MCF 10A (cell line): ENCODE measurements at regions of chr14 and their contacts with region 1.

Region 1: DNA sequence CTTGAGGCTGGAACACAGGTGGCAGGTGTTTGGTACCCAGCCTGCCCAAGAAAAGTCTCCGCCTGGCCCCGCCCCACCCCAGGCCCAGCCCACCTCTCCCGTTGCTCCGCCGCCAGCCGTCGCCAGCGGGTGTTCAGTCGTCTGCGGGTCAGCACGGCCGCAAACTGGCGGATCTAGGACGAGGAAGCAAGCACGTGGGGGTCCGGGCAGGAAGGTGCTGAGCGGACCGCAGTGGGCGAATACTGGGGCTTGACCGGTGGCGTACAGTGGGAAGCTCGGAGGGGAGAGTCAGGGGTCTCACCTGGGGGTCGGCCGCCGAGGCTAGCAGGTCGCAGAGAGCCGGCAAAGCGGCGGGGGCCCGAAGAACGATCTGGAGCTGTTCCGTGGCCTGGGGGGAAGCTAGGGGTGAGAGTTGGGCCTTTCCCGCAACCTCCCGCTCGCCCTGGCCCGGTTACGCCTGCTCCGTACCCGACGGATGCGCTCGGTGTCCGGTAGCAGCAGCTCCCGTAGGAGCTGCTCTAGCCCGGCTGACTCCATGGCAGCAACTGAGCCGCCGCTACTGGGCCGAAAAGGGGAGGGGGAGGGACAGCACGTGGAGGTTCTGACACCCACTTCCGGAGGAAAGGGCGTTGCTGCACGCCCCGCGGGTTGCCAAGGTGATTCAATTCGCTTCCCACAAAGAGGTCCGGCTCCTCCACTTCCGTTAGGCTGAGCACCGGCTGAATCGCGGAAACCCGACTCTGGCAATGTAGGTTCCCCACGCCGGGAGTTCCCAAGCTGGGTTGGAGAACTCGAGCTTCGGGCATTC is at the start of gene IPO4:
- DNase-seq: peak; percentile 97
- H3K4me3 Mint-ChIP-seq: peak within 1 kb of the TSS; percentile 81
- H3K27ac Mint-ChIP-seq: peak within 1 kb of the TSS; percentile 84
- H3K4me1 Mint-ChIP-seq: peaks cover 12% of the 10 kb centered on the region
- H3K27me3 Mint-ChIP-seq: no peaks in the 10 kb centered on the region
- CTCF ChIP-seq: no peak
- total RNA-seq, gene IPO4: 57.2 and 100 TPM in 2 replicates

Region 2: DNA sequence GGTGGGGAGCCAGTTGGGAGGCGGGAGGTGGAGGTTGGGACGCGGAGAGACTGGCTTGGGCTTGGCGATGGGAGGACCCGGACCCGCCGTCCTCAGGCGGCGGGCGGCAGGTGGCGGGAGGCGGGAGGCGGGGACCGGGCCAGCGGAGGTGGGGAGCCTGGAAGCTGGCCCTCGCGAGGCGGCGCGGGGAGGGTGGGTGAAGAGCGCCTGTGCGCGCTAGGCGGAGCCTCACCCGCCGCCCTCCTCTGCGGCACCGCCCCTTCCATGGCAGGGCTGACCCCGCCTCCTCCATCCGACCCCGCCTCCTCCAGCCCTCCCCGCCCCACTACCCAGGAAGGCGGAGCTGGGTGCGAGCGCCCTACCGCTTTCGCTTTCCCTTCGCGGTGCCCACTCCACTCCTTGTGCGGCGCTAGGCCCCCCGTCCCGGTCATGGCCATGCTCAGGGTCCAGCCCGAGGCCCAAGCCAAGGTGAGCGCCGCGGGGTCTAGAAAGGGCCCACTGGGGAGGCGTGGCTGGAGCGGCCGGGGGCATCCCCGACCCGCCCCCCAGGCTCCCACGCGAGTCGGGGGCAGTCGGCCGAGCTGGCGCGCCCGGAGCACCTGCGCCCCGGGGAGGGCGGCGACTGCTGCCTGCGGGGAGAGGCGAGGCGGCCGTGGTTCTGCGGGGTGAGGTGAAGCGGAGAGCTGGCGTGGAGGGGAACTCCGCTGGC is 52.5 kb before region 1 on chr14 and contains the start of gene PSME1:
- CTCF ChIA-PET with region 1: no interaction called
- POLR2A ChIA-PET with region 1: interaction called, 14 read pairs
- intact Hi-C with region 1: no loop called
- DNase-seq: peak; percentile 89
- H3K4me3 Mint-ChIP-seq: peak within 1 kb of the TSS; percentile 75
- H3K27ac Mint-ChIP-seq: peak within 1 kb of the TSS; percentile 86
- H3K4me1 Mint-ChIP-seq: peaks cover 42% of the 10 kb centered on the region
- H3K27me3 Mint-ChIP-seq: no peaks in the 10 kb centered on the region
- CTCF ChIP-seq: no peak
- total RNA-seq, gene PSME1: 126 and 135 TPM in 2 replicates

Region 3: DNA sequence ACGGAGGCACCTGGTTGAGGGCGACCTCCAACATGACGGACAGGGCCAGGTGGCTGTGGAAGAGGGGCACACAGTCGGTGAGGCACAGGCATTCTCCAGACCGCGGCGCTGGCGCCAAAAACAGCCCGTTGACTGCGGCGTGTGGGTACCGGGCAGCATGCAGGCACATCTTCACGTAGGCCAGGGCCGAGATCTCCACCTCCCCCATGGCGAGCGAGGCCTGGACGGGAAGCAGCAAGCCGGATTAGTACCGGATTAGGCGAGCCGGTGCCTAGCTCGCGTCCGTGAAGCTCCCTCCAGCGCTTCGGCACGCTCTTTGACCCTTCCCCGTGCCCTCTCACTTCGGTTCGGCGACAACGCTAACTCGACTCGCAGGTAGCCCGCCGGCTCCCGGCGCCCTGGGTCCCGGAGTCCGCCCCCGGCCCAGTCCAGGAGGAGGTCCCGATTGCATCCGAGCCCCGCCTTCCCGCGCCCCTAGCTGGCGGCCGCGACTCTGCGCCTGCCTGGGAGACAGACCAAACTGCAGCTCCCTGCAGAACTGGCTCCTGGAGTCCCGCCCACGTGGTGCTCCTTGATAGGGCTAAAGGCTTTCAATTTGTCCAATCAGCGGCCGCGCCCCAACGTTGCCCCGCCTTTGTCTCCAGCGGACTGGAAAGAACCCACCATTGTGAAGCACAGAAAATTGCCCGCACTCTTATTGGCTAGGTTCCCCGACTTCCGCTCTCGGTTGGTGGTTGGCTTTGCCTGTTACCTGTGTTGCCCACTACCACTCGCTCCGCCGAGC is 47.2 kb before region 1 on chr14 and contains the start of gene EMC9:
- CTCF ChIA-PET with region 1: no interaction called
- POLR2A ChIA-PET with region 1: interaction called, 25 read pairs
- intact Hi-C with region 1: no loop called
- DNase-seq: peak; percentile 100
- H3K4me3 Mint-ChIP-seq: peak within 1 kb of the TSS; percentile 93
- H3K27ac Mint-ChIP-seq: peak within 1 kb of the TSS; percentile 64
- H3K4me1 Mint-ChIP-seq: peaks cover 21% of the 10 kb centered on the region
- H3K27me3 Mint-ChIP-seq: no peaks in the 10 kb centered on the region
- CTCF ChIP-seq: peak; percentile 14
- total RNA-seq, gene EMC9: 49.2 and 49.9 TPM in 2 replicates

Region 4: DNA sequence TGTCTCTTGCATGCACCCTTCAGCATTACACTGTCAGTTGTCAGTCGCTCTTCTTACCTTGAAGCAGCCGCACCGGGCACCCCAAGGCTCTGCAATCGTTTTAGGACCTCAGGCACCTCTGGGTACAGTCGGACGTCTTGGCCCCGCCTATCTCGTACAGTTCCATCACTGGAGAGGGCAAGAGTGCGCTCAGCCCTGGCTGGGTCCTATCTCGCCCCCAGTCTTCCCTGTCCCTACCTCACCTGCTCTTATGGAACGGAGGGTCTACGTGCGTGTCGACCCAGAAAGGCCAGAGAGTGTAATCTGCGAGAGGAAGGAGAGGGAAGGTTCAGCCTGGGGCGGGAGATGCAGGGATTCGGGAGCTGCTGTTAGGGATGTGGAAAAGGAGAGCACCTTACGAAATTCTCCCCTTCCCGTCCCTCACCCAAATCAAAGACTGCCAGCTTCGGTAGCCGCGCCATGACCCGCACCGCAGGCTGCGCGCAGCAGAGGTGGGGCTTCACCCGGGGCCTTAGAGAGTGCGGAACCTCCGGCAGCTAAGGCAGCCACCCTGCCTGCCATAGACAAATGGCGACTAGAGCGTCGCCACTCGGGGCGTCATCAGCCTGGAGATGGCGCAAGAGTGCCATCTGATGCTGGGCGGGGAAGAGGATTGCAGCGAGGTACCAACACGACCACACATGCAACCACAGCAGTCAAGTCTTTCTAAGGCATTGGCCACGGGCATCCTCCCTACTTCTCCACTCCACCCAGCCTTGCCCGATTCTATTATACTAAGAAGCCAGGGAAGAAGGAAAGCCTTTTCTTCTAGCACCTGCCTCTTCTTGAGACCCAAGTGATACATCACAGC is 27.3 kb after region 1 on chr14 and contains the start of gene MDP1:
- CTCF ChIA-PET with region 1: interaction called, 4 read pairs
- POLR2A ChIA-PET with region 1: interaction called, 68 read pairs
- intact Hi-C with region 1: loop called (anchors 2 kb)
- DNase-seq: peak; percentile 87
- H3K4me3 Mint-ChIP-seq: peak within 1 kb of the TSS; percentile 80
- H3K27ac Mint-ChIP-seq: peak within 1 kb of the TSS; percentile 73
- H3K4me1 Mint-ChIP-seq: peaks cover 20% of the 10 kb centered on the region
- H3K27me3 Mint-ChIP-seq: no peaks in the 10 kb centered on the region
- CTCF ChIP-seq: peak; percentile 25
- total RNA-seq, gene MDP1: 11.0 and 20.2 TPM in 2 replicates